GM10248 (cell line): ENCODE measurements at regions of chr19 and their contacts with region 1.

Region 1: GRCh38 chr19:40603389-40604135 is 2.4 kb downstream of the LTBP4 start:
- DNase-seq: peak; percentile 94
- CTCF ChIP-seq: no peak

Region 2: GRCh38 chr19:40542202-40542859 is 61.2 kb before region 1 on chr19:
- CTCF ChIA-PET with region 1: interaction called, 10 read pairs
- POLR2A ChIA-PET with region 1: no interaction called
- DNase-seq: no peak
- CTCF ChIP-seq: no peak

Region 3: GRCh38 chr19:40570313-40571004 is 33.1 kb before region 1 on chr19:
- CTCF ChIA-PET with region 1: interaction called, 14 read pairs
- POLR2A ChIA-PET with region 1: no interaction called
- DNase-seq: peak; percentile 98
- CTCF ChIP-seq: peak; percentile 40